Activated CD8-positive, alpha-beta T cell treated with anti-CD3 and anti-CD28 coated beads for 36 hours (primary cell): ENCODE measurements at regions of chr16 and their contacts with region 1.

Region 1: GRCh38 chr16:89545831-89546574 is 14.5 kb upstream of the RPL13 start:
- DNase-seq: no peak
- ATAC-seq: no peak
- H3K4me3 Mint-ChIP-seq: no peak overlapping the region
- H3K27ac Mint-ChIP-seq: no peak overlapping the region
- H3K4me1 Mint-ChIP-seq: peaks cover 27% of the 10 kb centered on the region
- H3K27me3 Mint-ChIP-seq: no peaks in the 10 kb centered on the region
- CTCF ChIP-seq: no peak

Region 2: GRCh38 chr16:89560378-89561141 is 14.6 kb after region 1 on chr16 and contains the start of gene RPL13:
- CTCF ChIA-PET with region 1: interaction called, 13 read pairs
- POLR2A ChIA-PET with region 1: interaction called, 11 read pairs
- intact Hi-C with region 1: no loop called
- DNase-seq: peak; percentile 96
- ATAC-seq: peak; percentile 89
- H3K4me3 Mint-ChIP-seq: peak within 1 kb of the TSS; percentile 91
- H3K27ac Mint-ChIP-seq: peak within 1 kb of the TSS; percentile 94
- H3K4me1 Mint-ChIP-seq: peaks cover 51% of the 10 kb centered on the region
- H3K27me3 Mint-ChIP-seq: no peaks in the 10 kb centered on the region
- CTCF ChIP-seq: no peak
- total RNA-seq, gene RPL13: 3,056 to 3,151 TPM

Region 3: GRCh38 chr16:89565506-89566372 is 19.7 kb after region 1 on chr16:
- CTCF ChIA-PET with region 1: no interaction called
- POLR2A ChIA-PET with region 1: interaction called, 11 read pairs
- intact Hi-C with region 1: no loop called
- DNase-seq: peak; percentile 73
- ATAC-seq: peak; percentile 55
- H3K4me3 Mint-ChIP-seq: peak overlapping the region; percentile 50
- H3K27ac Mint-ChIP-seq: peak overlapping the region; percentile 73
- H3K4me1 Mint-ChIP-seq: peaks cover 43% of the 10 kb centered on the region
- H3K27me3 Mint-ChIP-seq: no peaks in the 10 kb centered on the region
- CTCF ChIP-seq: peak; percentile 68